Calu3 (cell line): ENCODE measurements at regions of chr5 and their contacts with region 1.

Region 1: DNA sequence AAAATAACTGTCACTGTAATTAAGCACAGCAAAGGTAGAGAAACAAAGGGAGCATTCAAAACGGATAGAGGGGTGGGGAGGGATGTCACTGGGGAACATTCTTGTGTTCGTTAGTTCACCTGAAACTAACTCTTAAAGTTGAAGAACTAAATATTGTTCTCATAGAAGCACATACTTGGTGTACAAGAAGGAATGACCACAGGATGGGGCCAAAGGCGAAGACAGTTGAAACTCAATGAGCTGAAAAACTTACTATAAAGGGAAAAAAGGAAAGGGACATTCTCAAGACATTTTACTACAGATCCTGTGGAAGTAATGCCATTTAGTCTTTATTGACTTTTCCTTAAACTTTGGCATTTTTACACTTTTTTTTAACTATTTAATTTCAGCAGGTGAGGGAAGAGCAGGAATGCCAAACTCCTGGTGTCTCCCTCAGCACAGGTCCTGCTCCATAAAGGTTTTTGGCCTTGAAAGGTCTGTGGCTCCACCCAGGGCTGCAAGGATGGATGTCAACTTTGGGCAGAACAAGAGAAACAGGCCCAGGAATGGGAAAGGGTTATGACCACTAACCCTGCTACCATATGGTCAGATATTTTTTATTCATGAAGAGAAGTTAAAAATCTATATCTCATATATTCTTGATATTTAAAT is 197.6 kb upstream of the RASA1 start:
- DNase-seq: peak; percentile 74
- H3K4me3 Mint-ChIP-seq: peak overlapping the region; percentile 9
- H3K27ac Mint-ChIP-seq: peak overlapping the region; percentile 75
- H3K4me1 Mint-ChIP-seq: peaks cover 33% of the 10 kb centered on the region
- H3K27me3 Mint-ChIP-seq: no peaks in the 10 kb centered on the region
- CTCF ChIP-seq: peak; percentile 58

Region 2: DNA sequence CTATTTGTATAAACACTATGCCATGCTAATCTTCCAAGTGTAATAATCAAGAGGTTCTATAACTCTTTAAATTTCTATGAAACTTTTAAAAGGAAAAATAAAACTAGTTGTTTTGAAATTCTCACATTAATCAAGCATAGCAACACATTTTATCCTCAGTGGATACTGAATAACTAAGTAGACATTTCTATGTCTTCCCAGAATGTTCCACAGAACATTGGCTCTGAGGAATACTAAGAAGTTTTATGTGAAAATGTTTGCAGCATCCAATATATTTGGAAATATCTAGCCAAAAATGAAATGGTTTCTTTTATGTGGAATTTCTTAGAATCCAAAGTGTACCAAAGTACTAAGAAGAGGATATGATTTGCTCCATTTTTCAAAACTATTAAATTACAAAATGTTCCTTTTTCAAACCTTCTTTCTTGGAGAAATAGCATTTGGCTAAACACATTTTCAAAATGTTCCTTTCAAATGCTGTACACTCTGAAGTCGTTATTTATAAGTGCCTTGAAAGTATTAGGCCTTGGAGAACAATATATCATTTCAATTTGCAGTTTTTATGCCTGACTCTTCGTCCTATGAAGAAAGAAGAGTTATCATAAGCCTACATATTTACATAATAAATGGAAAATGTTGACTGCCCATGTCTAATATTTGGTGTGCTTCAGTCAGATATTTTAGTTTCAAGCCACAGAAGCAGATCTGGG is 627.9 kb before region 1 on chr5:
- CTCF ChIA-PET with region 1: no interaction called
- intact Hi-C with region 1: no loop called
- DNase-seq: no peak
- H3K4me3 Mint-ChIP-seq: no peak overlapping the region
- H3K27ac Mint-ChIP-seq: no peak overlapping the region
- H3K4me1 Mint-ChIP-seq: no peaks in the 10 kb centered on the region
- H3K27me3 Mint-ChIP-seq: no peaks in the 10 kb centered on the region
- CTCF ChIP-seq: no peak

Region 3: GRCh38 chr5:86968301-86968753 is 101.8 kb before region 1 on chr5:
- CTCF ChIA-PET with region 1: no interaction called
- intact Hi-C with region 1: no loop called
- DNase-seq: peak; percentile 56
- H3K4me3 Mint-ChIP-seq: no peak overlapping the region
- H3K27ac Mint-ChIP-seq: peak overlapping the region; percentile 43
- H3K4me1 Mint-ChIP-seq: peaks cover 37% of the 10 kb centered on the region
- H3K27me3 Mint-ChIP-seq: no peaks in the 10 kb centered on the region
- CTCF ChIP-seq: no peak

Region 4: DNA sequence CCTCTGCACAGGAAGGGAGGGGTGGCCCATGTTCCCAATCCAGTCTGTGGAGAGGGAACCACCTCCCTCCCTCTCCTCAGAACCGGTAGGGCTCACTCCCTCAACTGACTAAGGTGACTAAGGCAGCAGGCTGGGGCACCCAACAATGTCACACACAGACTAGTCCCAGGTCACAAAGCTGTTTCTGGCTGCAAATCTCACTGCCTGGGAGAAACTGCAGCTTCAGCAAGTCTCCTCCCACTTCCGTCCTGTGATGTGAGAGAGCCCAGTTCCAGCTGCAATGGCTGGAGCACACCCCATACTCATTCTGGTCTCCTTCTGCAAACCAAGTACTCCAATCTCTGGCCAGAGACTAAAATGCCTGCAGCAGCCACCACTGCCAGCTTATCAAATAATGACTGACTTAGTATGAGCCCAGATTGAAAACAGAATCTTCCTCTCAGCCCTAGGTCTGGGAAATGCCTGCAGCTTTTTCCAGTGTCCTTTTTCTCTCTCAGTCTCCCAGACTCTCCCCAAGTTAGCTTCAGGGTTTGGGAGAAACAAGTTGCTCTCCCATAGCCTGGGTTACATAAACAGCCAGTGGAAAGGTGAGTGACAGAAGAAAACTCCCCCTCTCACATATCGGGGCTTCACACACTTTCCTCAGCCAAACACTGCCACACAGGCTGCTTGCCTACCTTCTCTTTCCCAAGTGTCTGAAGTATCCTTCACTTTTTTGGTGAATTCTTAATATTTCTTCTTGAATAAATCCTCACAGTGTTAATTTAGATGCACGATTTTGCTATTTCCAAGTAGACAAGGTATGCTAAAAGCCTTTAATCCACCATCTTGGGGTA is 49.8 kb before region 1 on chr5:
- CTCF ChIA-PET with region 1: no interaction called
- intact Hi-C with region 1: no loop called
- DNase-seq: peak; percentile 67
- H3K4me3 Mint-ChIP-seq: peak overlapping the region; percentile 43
- H3K27ac Mint-ChIP-seq: peak overlapping the region; percentile 82
- H3K4me1 Mint-ChIP-seq: peaks cover 34% of the 10 kb centered on the region
- H3K27me3 Mint-ChIP-seq: no peaks in the 10 kb centered on the region
- CTCF ChIP-seq: no peak

Region 5: DNA sequence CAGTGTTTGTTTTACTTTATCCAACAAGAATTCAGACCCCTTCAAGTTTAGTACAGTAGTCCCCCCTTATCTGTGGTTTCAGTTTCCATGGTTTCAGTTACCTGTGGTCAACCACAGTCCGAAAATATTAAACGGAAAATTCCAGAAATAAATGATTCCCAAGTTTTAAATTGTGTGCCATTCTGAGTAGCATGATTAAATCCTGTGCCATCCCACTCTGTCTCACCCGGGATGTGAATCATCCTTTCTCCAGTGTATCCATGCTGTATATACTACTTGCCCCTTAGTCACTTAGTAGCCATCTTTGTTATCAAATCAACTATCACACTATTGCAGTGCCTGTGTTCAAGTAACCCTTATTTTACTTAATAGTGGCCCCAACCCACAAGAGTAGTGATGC is 43.8 kb after region 1 on chr5:
- CTCF ChIA-PET with region 1: interaction called, 16 read pairs
- intact Hi-C with region 1: loop called (anchors 1 kb)
- DNase-seq: peak; percentile 41
- H3K4me3 Mint-ChIP-seq: no peak overlapping the region
- H3K27ac Mint-ChIP-seq: peak overlapping the region; percentile 99
- H3K4me1 Mint-ChIP-seq: peaks cover 75% of the 10 kb centered on the region
- H3K27me3 Mint-ChIP-seq: no peaks in the 10 kb centered on the region
- CTCF ChIP-seq: no peak

Region 6: DNA sequence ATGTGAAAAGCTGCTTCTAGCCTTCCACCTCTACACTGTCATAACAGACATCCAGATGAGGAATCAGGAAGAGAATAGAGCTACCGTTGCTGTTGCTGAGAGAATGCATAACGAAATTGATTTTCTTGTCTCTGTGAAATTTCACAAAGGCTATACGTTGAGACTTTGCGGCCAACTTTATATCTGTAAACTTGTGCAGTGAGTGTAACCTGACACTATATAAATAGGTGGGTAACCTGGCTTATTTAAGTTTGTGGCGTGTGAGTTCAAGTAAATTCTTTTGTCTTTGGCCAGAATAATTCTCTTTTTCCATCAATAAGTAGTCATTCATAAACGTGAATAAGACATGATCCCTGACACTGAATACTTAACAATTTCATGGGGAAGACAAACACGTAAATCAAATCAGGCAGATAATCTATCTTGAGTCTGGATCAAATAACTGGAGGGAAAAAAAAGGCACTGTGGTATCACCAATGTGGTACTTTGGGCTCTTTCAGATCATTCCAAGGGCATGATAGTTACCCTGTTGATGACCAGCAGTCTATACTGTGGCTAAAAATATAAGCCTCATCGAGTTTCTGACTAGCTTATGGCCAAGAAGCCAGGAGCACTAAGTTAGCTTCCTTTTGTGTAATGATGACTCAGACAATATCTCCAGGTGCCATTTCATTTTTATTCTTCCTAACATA is 99.3 kb after region 1 on chr5:
- CTCF ChIA-PET with region 1: interaction called, 8 read pairs
- intact Hi-C with region 1: loop called (anchors 5 kb)
- DNase-seq: no peak
- H3K4me3 Mint-ChIP-seq: peak overlapping the region; percentile 37
- H3K27ac Mint-ChIP-seq: peak overlapping the region; percentile 91
- H3K4me1 Mint-ChIP-seq: peaks cover 40% of the 10 kb centered on the region
- H3K27me3 Mint-ChIP-seq: no peaks in the 10 kb centered on the region
- CTCF ChIP-seq: no peak

Region 7: DNA sequence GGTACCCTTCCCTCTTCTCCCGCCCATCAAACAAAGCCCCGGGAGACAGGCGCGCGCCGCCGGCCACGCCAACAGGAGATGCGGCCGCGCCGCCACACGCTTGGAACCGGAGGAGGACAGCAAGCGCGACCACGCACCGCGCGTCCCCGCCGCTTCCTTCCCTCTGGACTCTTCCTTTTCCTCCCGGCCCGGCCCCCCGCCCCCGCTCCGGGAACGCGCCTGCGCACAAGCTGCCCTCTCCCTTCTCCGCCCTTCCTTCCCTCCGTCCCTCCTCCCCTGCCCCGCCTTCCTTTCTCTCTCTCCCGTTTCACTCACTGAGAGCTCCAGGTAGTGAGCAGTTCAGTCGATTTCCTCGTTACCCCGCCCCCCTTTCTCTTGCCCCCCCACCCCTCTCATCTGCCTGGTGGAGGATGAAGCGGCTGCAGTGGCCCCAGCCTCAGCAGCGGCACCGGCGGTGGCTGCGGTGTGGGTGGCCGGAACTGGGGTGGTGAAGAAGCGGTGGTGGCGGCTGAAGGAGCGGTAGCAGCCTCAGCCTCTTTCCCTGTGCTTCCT is 197.6 kb after region 1 on chr5 and contains the start of gene RASA1:
- CTCF ChIA-PET with region 1: interaction called, 15 read pairs
- intact Hi-C with region 1: loop called (anchors 1 kb)
- DNase-seq: peak; percentile 99
- H3K4me3 Mint-ChIP-seq: peak within 1 kb of the TSS; percentile 97
- H3K27ac Mint-ChIP-seq: peak within 1 kb of the TSS; percentile 93
- H3K4me1 Mint-ChIP-seq: peaks cover 31% of the 10 kb centered on the region
- H3K27me3 Mint-ChIP-seq: no peaks in the 10 kb centered on the region
- CTCF ChIP-seq: no peak
- total RNA-seq, gene RASA1: 163 and 193 TPM in 2 replicates